Heart left ventricle (tissue), 16 donors: ENCODE measurements at regions of chr16 and their contacts with region 1.

Region 1: GRCh38 chr16:46689365-46690280 is at the start of gene ORC6:
- DNase-seq: peak; percentile 97 to 99 (median 98)
- ATAC-seq: peak; percentile 90 to 93 (median 92)
- H3K4me3 ChIP-seq: peak within 1 kb of the TSS; percentile 52 to 97 (median 87)
- H3K27ac ChIP-seq: peak within 1 kb of the TSS; percentile 70 to 98 (median 92)
- H3K4me1 ChIP-seq: peaks cover 0 to 53% (median 30%) of the 10 kb centered on the region in 12 donors
- H3K27me3 ChIP-seq: no peaks in the 10 kb centered on the region
- CTCF ChIP-seq: peak in 6 of 12 donors; percentile 28 to 43 (median 30)
- POLR2A ChIP-seq: no peak
- total RNA-seq, gene ORC6: 1.3 to 4.3 (median 2.5) TPM

Region 2: GRCh38 chr16:46629331-46630219 is 60.0 kb before region 1 on chr16:
- intact Hi-C with region 1: loop called in 1 of 10 experiments (anchors 10 kb)
- DNase-seq: no peak
- ATAC-seq: peak in 1 of 4 donors; percentile 35
- H3K4me3 ChIP-seq: no peak overlapping the region
- H3K27ac ChIP-seq: no peak overlapping the region
- H3K4me1 ChIP-seq: no peaks in the 10 kb centered on the region
- H3K27me3 ChIP-seq: no peaks in the 10 kb centered on the region
- CTCF ChIP-seq: peak in 4 of 12 donors; percentile 23 to 39 (median 38)
- POLR2A ChIP-seq: no peak

Region 3: DNA sequence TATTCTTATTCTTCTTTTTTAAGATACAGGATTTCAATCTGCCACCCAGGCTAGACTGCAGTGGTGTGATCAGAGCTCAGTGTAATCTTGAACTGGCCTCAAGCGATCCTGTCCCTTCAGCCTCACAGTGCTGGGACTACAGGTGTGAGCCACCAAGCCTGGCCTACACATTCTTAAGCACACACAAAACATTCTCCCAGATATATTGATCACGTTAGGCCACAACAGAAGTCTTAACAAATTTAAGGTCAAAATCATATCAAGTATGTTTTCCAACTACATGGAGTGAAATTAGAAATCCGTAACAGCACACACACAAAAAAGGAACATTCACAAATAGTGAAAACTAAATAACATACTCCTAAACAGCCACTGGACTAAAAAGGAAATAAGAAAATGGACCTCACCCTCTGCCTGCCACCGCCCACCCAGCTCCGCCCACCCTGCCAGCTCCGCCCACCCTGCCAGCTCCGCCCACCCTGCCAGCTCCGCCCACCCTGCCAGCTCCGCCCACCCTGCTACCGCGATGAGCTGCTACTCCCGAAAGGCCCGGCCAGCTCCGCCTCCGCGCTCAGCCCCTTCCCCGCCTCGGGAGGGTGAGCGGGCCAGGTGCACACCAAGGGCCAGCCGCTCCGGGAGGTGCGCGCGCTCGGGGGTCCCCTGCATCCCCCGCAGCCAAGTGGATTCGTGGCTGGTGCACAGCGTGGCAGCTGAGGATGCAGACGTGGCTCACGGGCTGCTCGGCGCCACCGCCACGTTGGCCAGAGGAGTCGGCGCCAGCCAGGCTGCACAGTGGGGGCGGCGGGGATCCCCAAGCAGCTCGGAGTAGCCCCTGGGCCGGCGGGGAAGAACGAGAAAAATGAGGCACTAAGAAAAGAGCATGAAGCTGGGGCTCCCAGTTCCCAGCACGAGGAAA is 100.1 kb after region 1 on chr16:
- intact Hi-C with region 1: loop called in 2 of 10 experiments (anchors 5 kb)
- DNase-seq: peak; percentile 81 to 89 (median 85)
- ATAC-seq: peak; percentile 92 to 99 (median 98)
- H3K4me3 ChIP-seq: peak overlapping the region; percentile 42 to 79 (median 66)
- H3K27ac ChIP-seq: peak overlapping the region in 10 of 12 donors; percentile 27 to 83 (median 58)
- H3K4me1 ChIP-seq: peaks cover 0 to 19% (median 2%) of the 10 kb centered on the region in 12 donors
- H3K27me3 ChIP-seq: no peaks in the 10 kb centered on the region
- CTCF ChIP-seq: no peak
- POLR2A ChIP-seq: no peak

Region 4: GRCh38 chr16:46830902-46831647 is 141.5 kb after region 1 on chr16 and contains the start of gene C16orf87:
- intact Hi-C with region 1: loop called in 2 of 10 experiments (anchors 2 to 5 kb)
- DNase-seq: peak; percentile 92 to 96 (median 95)
- ATAC-seq: peak; percentile 96 to 99 (median 98)
- H3K4me3 ChIP-seq: peak within 1 kb of the TSS; percentile 62 to 97 (median 90)
- H3K27ac ChIP-seq: peak within 1 kb of the TSS; percentile 62 to 93 (median 90)
- H3K4me1 ChIP-seq: peaks cover 0 to 24% (median 6%) of the 10 kb centered on the region in 12 donors
- H3K27me3 ChIP-seq: no peaks in the 10 kb centered on the region
- CTCF ChIP-seq: peak in 2 of 12 donors; percentile 5 to 7
- POLR2A ChIP-seq: peak in 1 of 2 donors; percentile 60
- total RNA-seq, gene C16orf87: 8.9 to 15.8 (median 13.6) TPM

Region 5: GRCh38 chr16:46973207-46973995 is 283.8 kb after region 1 on chr16 and contains the start of gene DNAJA2:
- intact Hi-C with region 1: loop called in 1 of 10 experiments (anchors 2 kb)
- DNase-seq: peak; percentile 93 to 97 (median 94)
- ATAC-seq: peak; percentile 97 to 99 (median 99)
- H3K4me3 ChIP-seq: peak within 1 kb of the TSS; percentile 72 to 98 (median 84)
- H3K27ac ChIP-seq: peak within 1 kb of the TSS; percentile 90 to 99 (median 96)
- H3K4me1 ChIP-seq: peaks cover 0 to 53% (median 39%) of the 10 kb centered on the region in 12 donors
- H3K27me3 ChIP-seq: no peaks in the 10 kb centered on the region
- CTCF ChIP-seq: peak in 2 of 12 donors; percentile 23 to 29
- POLR2A ChIP-seq: peak in 1 of 2 donors; percentile 91
- total RNA-seq, gene DNAJA2: 58.5 to 92.6 (median 81.4) TPM